ENCODE measurements at regions of chr5 and their contacts with region 1.

Region 1: GRCh38 chr5:131796793-131797693 is at the start of gene FNIP1:
- DNase-seq: peak; percentile 96 to 99 (median 98)
- ATAC-seq: peak; percentile 94
- H3K4me3 ChIP-seq: peak within 1 kb of the TSS; percentile 82 to 90
- H3K4me3 Mint-ChIP-seq: peak within 1 kb of the TSS; percentile 97
- H3K27ac ChIP-seq: peak within 1 kb of the TSS; percentile 88 to 93
- H3K27ac Mint-ChIP-seq: peak within 1 kb of the TSS; percentile 98
- H3K4me1 ChIP-seq: peaks cover 20% of the 10 kb centered on the region
- H3K4me1 Mint-ChIP-seq: peaks cover 37% of the 10 kb centered on the region
- H3K27me3 ChIP-seq: no peaks in the 10 kb centered on the region
- H3K27me3 Mint-ChIP-seq: no peaks in the 10 kb centered on the region
- CTCF ChIP-seq: no peak
- total RNA-seq, gene FNIP1: 29.4 to 29.7 TPM

Region 2: GRCh38 chr5:131165119-131165727 is 631.8 kb before region 1 on chr5 and contains the start of gene HINT1:
- CTCF ChIA-PET with region 1: no interaction called
- POLR2A ChIA-PET with region 1: no interaction called
- intact Hi-C with region 1: loop called (anchors 5 to 10 kb)
- DNase-seq: peak; percentile 81 to 96 (median 93)
- ATAC-seq: peak; percentile 83
- H3K4me3 ChIP-seq: peak within 1 kb of the TSS; percentile 85 to 90
- H3K4me3 Mint-ChIP-seq: peak within 1 kb of the TSS; percentile 95
- H3K27ac ChIP-seq: peak within 1 kb of the TSS; percentile 85 to 91
- H3K27ac Mint-ChIP-seq: peak within 1 kb of the TSS; percentile 98
- H3K4me1 ChIP-seq: peaks cover 40% of the 10 kb centered on the region
- H3K4me1 Mint-ChIP-seq: peaks cover 49% of the 10 kb centered on the region
- H3K27me3 ChIP-seq: no peaks in the 10 kb centered on the region
- H3K27me3 Mint-ChIP-seq: no peaks in the 10 kb centered on the region
- CTCF ChIP-seq: no peak
- total RNA-seq, gene HINT1: 243 to 252 TPM

Region 3: DNA sequence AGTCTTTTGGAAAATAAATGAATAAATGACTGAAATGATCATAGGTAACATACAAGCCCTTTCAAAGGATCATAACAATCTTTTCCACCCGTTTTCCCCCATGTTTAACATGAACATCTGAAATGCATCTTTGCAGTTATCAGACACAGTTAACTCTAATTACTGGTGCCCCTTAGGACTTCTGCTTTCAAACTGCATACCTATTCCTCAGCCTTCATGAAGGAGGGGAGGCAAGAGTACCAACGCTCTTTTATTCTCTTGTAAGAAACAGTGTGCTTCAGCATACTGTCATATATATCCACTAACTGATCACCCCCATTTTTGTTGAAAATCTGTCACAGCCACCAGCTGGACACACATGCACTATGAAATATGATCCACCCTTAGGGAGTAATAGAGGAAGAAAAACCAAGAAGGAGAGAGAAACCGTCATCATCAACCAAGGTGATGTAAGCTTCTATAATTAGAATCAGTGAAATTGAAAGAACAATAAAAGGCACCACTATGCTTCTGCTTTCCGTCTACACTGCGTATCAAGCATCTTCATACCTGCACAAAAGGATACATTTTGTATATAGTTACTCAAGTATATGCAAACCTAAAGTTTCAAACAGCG is 260.7 kb before region 1 on chr5:
- CTCF ChIA-PET with region 1: no interaction called
- POLR2A ChIA-PET with region 1: no interaction called
- intact Hi-C with region 1: loop called in 1 of 2 experiments (anchors 5 kb)
- DNase-seq: peak in 2 of 9 experiments; percentile 32 to 63
- ATAC-seq: peak; percentile 56
- H3K4me3 ChIP-seq: no peak overlapping the region
- H3K4me3 Mint-ChIP-seq: peak overlapping the region; percentile 66
- H3K27ac ChIP-seq: peak overlapping the region; percentile 1 to 41
- H3K27ac Mint-ChIP-seq: peak overlapping the region; percentile 93
- H3K4me1 ChIP-seq: peaks cover 88% of the 10 kb centered on the region
- H3K4me1 Mint-ChIP-seq: peaks cover 82% of the 10 kb centered on the region
- H3K27me3 ChIP-seq: no peaks in the 10 kb centered on the region
- H3K27me3 Mint-ChIP-seq: no peaks in the 10 kb centered on the region
- CTCF ChIP-seq: no peak

Region 4: GRCh38 chr5:131747180-131748105 is 49.6 kb before region 1 on chr5:
- CTCF ChIA-PET with region 1: no interaction called
- POLR2A ChIA-PET with region 1: no interaction called
- intact Hi-C with region 1: loop called (anchors 2 kb)
- DNase-seq: peak in 2 of 9 experiments; percentile 9 to 44
- ATAC-seq: peak; percentile 81
- H3K4me3 ChIP-seq: no peak overlapping the region
- H3K4me3 Mint-ChIP-seq: peak overlapping the region; percentile 47
- H3K27ac ChIP-seq: peak overlapping the region; percentile 20 to 44
- H3K27ac Mint-ChIP-seq: peak overlapping the region; percentile 89
- H3K4me1 ChIP-seq: peaks cover 17% of the 10 kb centered on the region
- H3K4me1 Mint-ChIP-seq: peaks cover 43% of the 10 kb centered on the region
- H3K27me3 ChIP-seq: no peaks in the 10 kb centered on the region
- H3K27me3 Mint-ChIP-seq: no peaks in the 10 kb centered on the region
- CTCF ChIP-seq: no peak

Region 5: DNA sequence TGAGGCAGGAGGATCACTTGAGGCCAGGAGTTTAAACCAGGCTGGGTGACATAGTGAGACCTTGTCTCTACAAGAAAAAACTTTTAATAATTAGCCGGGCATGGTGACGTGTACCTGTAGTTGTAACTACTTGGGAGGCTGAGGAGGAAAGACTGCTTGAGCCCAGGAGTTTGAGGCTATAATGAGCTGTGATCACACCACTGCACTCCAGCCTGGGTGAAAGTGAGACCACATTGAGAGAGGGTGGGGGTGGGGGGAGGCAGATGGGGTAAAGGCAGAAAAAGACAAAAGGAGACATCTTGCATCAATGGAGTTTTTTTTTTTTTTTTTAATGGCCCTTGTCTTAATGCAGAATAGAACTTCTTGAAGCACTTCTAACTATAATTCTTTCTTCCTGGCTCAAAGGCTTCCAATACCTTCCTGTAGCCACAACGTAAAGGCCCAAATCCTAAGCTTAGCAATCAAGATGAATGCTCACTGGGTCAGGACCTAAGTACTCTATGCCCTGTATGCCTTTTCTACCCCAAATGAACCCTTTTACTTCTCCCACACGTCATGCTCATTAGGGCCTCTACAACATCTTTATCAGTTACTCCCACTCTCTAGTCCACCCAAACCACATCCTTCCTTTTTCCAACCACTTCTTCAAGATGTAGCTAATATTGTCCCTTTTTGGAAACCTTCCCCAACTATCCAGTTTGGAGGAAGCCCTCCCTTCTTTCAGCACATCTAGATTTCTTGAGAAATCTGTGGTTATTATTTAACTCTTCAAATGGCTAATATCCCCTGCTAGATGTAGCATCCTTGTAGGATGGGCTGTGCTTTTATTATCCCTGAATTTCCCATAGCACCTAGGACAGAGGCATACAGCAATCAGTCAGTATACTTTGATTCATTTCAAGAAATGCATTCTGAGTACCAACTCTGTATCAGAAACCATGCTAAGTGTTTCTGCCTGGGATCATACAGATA is 317.4 kb after region 1 on chr5:
- CTCF ChIA-PET with region 1: no interaction called
- POLR2A ChIA-PET with region 1: no interaction called
- intact Hi-C with region 1: no loop called
- DNase-seq: peak in 1 of 9 experiments; percentile 39
- ATAC-seq: no peak
- H3K4me3 ChIP-seq: no peak overlapping the region
- H3K4me3 Mint-ChIP-seq: no peak overlapping the region
- H3K27ac ChIP-seq: no peak overlapping the region
- H3K27ac Mint-ChIP-seq: peak overlapping the region; percentile 37
- H3K4me1 ChIP-seq: peaks cover 19% of the 10 kb centered on the region
- H3K4me1 Mint-ChIP-seq: peaks cover 48% of the 10 kb centered on the region
- H3K27me3 ChIP-seq: no peaks in the 10 kb centered on the region
- H3K27me3 Mint-ChIP-seq: no peaks in the 10 kb centered on the region
- CTCF ChIP-seq: no peak

Region 6: DNA sequence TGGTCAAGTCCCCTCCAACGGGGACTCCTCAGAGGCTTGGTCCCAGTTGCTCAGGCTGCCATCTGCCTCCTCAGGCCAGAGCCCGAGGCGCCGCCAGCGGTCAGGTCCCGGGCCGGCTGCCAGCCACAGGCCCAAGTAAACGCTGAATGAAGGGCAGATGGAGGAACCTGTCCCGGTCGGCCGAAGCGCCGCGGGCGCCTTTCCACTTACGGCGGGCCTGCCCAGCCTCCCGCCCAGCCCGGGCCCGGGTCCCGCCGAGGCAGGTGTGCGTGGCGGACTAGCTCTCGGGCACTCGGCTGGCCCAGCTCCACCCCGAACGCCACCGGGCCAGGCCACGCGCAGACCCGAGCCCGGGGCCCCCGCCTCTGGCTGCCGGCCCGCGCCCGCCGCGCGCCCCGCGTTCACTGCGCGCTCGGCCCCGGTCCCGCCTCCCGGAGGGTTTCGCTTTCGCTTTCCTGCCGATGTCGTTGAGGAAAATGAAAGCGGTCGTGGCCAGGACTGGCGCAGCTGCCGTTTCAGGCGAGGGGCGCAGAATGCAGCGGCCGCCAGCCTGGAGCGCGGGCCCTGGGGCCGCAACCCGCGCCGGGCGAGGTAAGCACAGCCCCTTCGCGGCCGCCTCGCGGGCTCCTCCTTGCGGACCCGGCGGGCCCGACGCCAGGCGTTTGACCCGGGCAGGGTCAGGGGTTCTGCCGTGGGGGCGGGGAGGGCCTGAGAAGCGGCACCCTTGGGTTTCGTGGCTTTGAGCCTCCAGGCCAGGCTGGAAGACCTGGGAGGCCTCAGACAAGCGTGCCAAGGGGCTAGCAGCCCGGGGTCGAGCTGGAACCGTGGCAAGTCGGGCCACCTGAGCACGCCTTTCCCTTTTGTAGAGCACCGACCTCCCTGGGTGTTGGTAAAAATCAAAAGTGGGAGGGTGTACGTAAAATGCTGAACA is 613.7 kb after region 1 on chr5:
- CTCF ChIA-PET with region 1: no interaction called
- POLR2A ChIA-PET with region 1: no interaction called
- intact Hi-C with region 1: loop called in 1 of 2 experiments (anchors 10 kb)
- DNase-seq: peak; percentile 61 to 93 (median 80)
- ATAC-seq: peak; percentile 66
- H3K4me3 ChIP-seq: peak overlapping the region; percentile 73 to 94
- H3K4me3 Mint-ChIP-seq: peak overlapping the region; percentile 95
- H3K27ac ChIP-seq: peak overlapping the region; percentile 96 to 98
- H3K27ac Mint-ChIP-seq: peak overlapping the region; percentile 98
- H3K4me1 ChIP-seq: peaks cover 79% of the 10 kb centered on the region
- H3K4me1 Mint-ChIP-seq: peaks cover 80% of the 10 kb centered on the region
- H3K27me3 ChIP-seq: no peaks in the 10 kb centered on the region
- H3K27me3 Mint-ChIP-seq: no peaks in the 10 kb centered on the region
- CTCF ChIP-seq: peak; percentile 44

Region 7: GRCh38 chr5:133051580-133052332 is 1254.7 kb after region 1 on chr5 and contains the start of gene HSPA4:
- CTCF ChIA-PET with region 1: no interaction called
- POLR2A ChIA-PET with region 1: interaction called, 3 read pairs
- intact Hi-C with region 1: loop called in 1 of 2 experiments (anchors 2 kb)
- DNase-seq: peak; percentile 93 to 100 (median 97)
- ATAC-seq: peak; percentile 89
- H3K4me3 ChIP-seq: peak within 1 kb of the TSS; percentile 88 to 100
- H3K4me3 Mint-ChIP-seq: peak within 1 kb of the TSS; percentile 99
- H3K27ac ChIP-seq: peak within 1 kb of the TSS; percentile 97
- H3K27ac Mint-ChIP-seq: peak within 1 kb of the TSS; percentile 100
- H3K4me1 ChIP-seq: peaks cover 46% of the 10 kb centered on the region
- H3K4me1 Mint-ChIP-seq: peaks cover 56% of the 10 kb centered on the region
- H3K27me3 ChIP-seq: no peaks in the 10 kb centered on the region
- H3K27me3 Mint-ChIP-seq: no peaks in the 10 kb centered on the region
- CTCF ChIP-seq: no peak
- total RNA-seq, gene HSPA4: 24.4 to 29.7 TPM

Region 8: GRCh38 chr5:133773247-133774202 is 1976.5 kb after region 1 on chr5:
- CTCF ChIA-PET with region 1: no interaction called
- POLR2A ChIA-PET with region 1: no interaction called
- intact Hi-C with region 1: no loop called
- DNase-seq: peak in 1 of 9 experiments; percentile 21
- ATAC-seq: no peak
- H3K4me3 ChIP-seq: no peak overlapping the region
- H3K4me3 Mint-ChIP-seq: no peak overlapping the region
- H3K27ac ChIP-seq: no peak overlapping the region
- H3K27ac Mint-ChIP-seq: no peak overlapping the region
- H3K4me1 ChIP-seq: no peaks in the 10 kb centered on the region
- H3K4me1 Mint-ChIP-seq: no peaks in the 10 kb centered on the region
- H3K27me3 ChIP-seq: no peaks in the 10 kb centered on the region
- H3K27me3 Mint-ChIP-seq: peaks cover 7% of the 10 kb centered on the region
- CTCF ChIP-seq: no peak

Measured in CD8-positive, alpha-beta T cell (primary cell).